Right ventricle myocardium inferior (tissue), 1 donor: ENCODE measurements at regions of chr22 and their contacts with region 1.

Region 1: DNA sequence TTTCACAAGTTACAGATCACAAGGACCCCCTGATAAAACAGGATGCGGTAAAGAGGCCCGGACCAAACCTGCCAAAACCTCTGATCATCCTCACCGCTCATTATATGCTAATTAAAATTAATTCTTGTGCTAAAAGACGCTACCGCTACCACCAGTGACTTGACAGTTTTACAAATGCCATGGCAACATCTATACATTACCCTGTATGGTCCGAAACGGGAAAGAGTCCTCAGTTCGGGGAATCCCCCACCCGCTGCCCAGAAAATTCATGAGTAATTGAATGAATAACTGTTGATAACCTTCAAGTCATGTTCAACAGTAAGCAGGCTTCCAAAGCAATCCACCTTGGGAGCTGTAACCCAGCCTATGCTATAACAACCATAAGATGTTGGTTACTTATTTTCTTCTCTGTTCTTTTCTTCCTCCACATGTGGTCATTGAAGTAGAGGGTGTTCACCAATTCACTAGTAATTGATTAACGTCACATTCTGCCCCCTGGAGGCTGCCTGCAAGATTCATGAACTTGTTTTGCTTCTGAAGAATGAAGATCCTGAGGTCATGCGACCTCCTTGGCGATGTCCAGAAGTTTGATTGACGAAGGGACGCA is 20.6 kb downstream of the APOBEC3H start:
- DNase-seq: no peak
- ATAC-seq: no peak

Region 2: DNA sequence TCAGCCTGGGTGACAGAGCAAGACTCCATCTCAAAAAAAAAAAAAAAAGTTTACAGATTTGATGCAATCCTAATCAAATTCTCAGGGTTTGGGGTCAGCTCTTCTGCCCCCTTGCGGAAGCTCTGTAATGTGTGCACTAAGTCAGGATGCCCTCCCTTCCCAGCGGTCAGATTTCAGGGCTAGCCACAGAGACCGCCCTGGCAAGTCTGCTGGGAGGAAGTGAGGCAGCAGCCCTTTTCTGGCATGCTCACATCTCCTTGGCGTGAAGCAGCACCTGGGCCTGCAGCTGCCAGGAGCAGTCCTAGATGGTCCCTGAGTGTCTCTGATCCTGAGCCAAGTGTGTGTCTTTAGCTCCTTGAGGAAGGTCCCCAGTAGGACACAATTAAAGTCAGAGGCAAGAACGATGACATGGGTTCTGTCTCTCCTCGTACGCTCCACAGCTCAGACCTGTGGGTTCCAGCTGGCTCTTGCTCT is 114.5 kb before region 1 on chr22:
- intact Hi-C with region 1: loop called (anchors 5 kb)
- DNase-seq: peak; percentile 85
- ATAC-seq: peak; percentile 89

Region 3: DNA sequence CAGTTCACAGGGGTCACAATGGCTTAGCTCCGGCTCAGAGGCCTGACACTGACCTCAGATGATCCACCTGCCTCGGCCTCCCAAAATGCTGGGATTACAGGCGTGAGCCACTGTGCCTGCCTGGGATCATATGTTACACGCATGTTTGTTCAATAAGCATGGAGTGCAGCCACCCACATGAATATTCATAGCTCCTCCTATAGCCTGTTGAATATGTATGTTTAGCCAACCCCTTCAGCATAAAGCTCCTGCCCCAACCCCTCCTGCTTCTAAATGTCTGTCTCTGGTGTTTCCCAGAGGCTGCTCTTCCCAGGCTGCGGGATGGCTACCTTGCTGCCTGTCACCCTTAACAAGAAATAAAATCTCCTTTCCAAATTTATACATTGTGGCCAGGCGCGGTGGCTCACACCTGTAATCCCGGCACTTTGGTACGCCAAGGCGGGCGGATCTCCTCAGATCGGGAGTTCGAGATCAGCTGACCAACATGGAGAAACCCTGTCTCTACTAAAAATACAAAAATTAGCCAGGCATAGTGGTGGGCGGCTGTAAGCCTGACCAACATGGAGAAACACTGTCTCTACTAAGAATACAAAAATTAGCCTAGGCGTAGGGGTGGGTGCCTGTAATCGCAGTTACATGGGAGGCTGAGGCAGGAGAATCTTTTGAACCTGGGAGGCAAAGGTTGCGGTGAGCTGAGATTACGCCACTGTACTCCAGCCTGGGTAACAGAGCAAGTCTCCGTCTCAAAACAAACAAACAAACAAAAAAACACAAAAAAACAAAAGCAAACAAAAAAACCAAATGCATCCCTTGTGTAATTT is 78.2 kb before region 1 on chr22:
- intact Hi-C with region 1: no loop called
- DNase-seq: no peak
- ATAC-seq: no peak